ENCODE measurements at regions of chr9 and their contacts with region 1.

Region 1: DNA sequence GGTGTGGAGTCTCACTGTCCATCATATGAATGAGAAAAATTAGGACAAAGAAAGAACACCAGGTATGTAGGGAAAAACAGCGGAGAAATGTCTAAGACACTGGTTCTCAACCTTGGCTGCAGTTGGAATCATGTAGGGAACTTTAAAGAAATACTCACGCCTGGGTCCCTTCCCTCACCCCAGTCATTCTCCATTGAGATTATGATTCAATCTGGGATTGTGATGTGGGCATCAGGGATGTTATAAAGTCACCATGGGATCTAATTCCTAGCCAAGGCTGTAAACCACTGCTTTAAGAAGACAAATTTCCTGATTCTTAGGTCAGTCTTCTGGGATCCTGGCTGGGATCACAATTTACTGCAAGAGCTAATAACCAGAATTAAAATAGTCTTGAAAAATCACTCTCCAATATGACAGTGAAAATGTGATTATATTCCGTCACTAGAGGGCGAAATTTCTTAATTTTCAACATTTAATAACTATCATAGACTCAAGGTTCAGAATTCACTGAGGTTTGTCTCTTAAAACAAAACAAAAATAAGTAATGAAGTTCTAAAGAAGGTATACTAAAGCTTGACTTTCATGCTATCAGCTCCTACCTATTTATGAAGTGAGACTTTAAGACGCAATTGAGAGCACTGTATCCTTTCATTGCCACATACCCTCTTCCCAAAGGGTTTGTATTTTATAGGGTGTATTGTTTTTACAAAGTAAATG is 60.5 kb downstream of the GLDC start:
- DNase-seq: no peak
- ATAC-seq: no peak

Region 2: DNA sequence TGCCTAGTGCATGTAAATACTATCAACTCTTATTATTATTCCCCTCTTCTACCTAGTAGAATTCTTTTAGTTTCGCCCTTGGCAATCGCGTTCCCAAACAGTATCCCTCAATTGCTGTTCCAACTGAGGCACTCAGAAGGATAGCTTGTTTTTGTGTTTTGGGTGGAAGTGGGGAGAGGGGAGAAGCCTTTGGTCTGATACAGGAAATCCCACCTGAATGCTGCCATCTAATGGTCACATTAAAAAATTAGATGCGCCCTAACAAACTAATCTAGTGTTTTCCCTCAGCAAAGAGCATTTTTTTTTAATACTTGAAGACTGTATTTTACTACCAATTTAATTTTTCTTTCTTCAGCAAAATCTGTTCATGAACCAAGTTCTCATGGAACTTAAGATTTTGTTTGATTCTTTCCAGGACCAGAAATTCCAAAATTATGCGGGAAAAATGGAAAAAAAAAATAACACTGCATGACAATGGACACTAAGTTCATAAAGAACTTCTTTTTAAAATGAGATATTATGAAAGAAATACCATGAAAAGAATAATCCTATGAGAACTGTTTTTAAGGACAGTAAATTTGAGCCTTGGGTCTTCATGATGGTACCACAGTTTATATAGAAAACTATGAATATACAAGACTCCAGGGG is 82.7 kb after region 1 on chr9:
- intact Hi-C with region 1: loop called (anchors 10 kb)
- DNase-seq: no peak
- ATAC-seq: no peak

Region 3: GRCh38 chr9:6845880-6846279 is 260.8 kb after region 1 on chr9:
- intact Hi-C with region 1: loop called (anchors 10 kb)
- DNase-seq: no peak
- ATAC-seq: peak; percentile 70

Region 4: GRCh38 chr9:7045361-7045760 is 460.3 kb after region 1 on chr9:
- intact Hi-C with region 1: no loop called
- DNase-seq: no peak
- ATAC-seq: no peak